Naive thymus-derived CD4-positive, alpha-beta T cell (primary cell): ENCODE measurements at regions of chr1 and their contacts with region 1.

Region 1: GRCh38 chr1:67430352-67431155 is at the start of gene SERBP1:
- DNase-seq: peak; percentile 86 to 97 (median 94)
- ATAC-seq: peak; percentile 94
- H3K4me3 ChIP-seq: peak within 1 kb of the TSS; percentile 98
- H3K4me3 Mint-ChIP-seq: peak within 1 kb of the TSS; percentile 93 to 99 (median 95)
- H3K27ac ChIP-seq: peak within 1 kb of the TSS; percentile 96
- H3K27ac Mint-ChIP-seq: peak within 1 kb of the TSS; percentile 95 to 99 (median 96)
- H3K4me1 ChIP-seq: peaks cover 5 to 16% of the 10 kb centered on the region in 2 donors
- H3K4me1 Mint-ChIP-seq: peaks cover 28 to 64% (median 57%) of the 10 kb centered on the region in 7 donors
- H3K27me3 ChIP-seq: no peaks in the 10 kb centered on the region
- H3K27me3 Mint-ChIP-seq: no peaks in the 10 kb centered on the region
- total RNA-seq, gene SERBP1: 108 to 282 (median 151) TPM

Region 2: DNA sequence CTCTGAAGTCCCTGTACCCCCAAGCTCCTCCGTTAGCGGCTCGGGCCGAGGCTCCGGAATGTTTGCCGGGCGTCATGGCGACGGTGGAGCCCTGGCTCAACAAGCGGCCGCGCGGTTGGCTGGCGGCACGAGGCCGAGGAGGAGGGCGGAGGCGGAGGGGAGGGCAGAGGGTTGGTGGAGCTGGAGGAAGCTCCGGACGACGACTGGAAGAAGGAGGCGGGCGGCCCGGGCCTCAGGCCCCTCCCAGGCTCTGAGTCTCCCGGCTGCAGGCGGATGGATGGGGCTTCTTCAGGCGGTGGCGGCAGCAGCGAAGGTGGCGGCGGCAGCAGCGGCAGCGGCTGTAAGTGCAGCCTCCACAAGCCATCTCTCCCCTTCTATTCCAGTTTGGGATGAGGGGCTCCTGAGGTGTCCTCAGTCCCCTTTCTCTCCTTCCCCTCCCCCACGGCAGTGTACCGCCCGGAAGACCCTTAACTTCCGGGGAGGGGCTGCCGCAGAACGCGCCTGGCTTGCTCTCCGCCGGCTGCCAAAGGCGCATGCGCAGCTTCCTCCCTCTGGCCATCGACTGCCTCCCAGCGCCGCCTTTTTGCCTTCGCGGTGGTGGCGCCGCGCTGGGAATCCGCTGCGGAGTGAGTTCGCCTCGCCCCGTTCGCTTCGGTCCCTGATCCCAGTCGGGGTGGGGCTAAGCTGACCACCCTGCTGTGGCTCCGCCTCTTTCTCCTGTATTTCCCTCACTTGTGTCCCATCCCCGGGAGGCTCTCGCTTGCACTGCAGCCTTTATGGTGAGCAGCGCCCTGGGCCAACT is 505.6 kb before region 1 on chr1 and contains the starts of genes DNAI4 and MIER1:
- CTCF ChIA-PET with region 1: no interaction called
- POLR2A ChIA-PET with region 1: no interaction called
- intact Hi-C with region 1: loop called (anchors 1 kb)
- DNase-seq: peak; percentile 91 to 98 (median 96)
- ATAC-seq: peak; percentile 97
- H3K4me3 ChIP-seq: peak within 1 kb of the TSS; percentile 83
- H3K4me3 Mint-ChIP-seq: peak within 1 kb of the TSS; percentile 92 to 98 (median 96)
- H3K27ac ChIP-seq: peak within 1 kb of the TSS; percentile 95
- H3K27ac Mint-ChIP-seq: peak within 1 kb of the TSS; percentile 95 to 97 (median 97)
- H3K4me1 ChIP-seq: peaks cover 24 to 37% of the 10 kb centered on the region in 2 donors
- H3K4me1 Mint-ChIP-seq: peaks cover 18 to 75% (median 60%) of the 10 kb centered on the region in 7 donors
- H3K27me3 ChIP-seq: no peaks in the 10 kb centered on the region
- H3K27me3 Mint-ChIP-seq: no peaks in the 10 kb centered on the region
- total RNA-seq, gene DNAI4: 1.3 to 10.7 (median 9.7) TPM
- total RNA-seq, gene MIER1: 51.5 to 73.6 (median 70.9) TPM

Region 3: DNA sequence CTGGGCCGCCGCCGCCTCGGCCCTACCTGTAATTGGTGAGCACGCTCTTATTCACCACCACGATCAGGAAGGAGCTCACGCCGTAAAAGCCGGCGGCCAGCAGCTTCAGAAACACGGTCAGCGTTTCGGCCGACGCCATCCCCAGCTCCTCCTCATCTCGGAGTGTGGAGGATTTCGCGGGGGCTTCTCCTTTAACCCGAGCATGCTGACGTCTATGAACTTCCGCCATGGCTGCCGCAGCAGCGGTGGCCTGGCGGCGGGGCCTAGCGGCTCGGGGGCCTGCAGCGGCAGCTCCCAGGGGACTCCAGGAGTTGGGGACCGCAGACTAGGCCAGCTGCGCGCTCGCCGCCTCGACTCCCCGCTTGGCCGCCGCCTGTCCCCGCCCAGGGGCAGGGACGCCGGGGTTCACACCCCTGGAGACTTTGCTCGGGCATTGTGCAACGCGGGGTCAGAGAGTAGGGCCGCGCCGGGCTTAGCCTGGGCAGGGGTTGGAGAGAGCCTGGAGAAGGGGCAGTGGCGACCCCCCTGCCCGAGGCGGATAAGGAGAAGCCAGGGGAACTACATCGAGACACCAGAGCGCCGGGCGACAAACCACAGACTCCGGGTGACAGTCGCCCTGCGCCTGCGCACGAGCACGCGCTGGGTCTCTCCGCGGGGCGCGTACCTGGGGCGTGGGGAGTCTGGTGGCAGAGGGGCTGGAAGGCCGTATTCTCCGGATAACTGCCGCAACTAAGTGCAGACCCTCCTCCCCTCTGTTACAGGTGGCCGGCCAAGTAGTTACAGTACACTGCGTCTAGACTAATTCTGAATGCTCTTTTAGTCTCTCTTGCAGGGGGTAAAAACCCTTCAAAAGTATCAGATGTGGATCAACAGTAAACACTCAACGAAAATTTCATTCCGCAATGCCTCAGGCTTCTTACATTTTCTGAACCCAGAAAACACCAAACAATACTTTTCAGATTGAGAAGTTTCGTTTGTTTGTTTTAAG is 376.5 kb before region 1 on chr1 and contains the start of gene SLC35D1:
- CTCF ChIA-PET with region 1: no interaction called
- POLR2A ChIA-PET with region 1: interaction called, 3 read pairs
- intact Hi-C with region 1: loop called (anchors 1 to 2 kb)
- DNase-seq: peak; percentile 65 to 88 (median 76)
- ATAC-seq: peak; percentile 86
- H3K4me3 ChIP-seq: peak within 1 kb of the TSS; percentile 87
- H3K4me3 Mint-ChIP-seq: peak within 1 kb of the TSS; percentile 90 to 97 (median 95)
- H3K27ac ChIP-seq: peak within 1 kb of the TSS; percentile 96
- H3K27ac Mint-ChIP-seq: peak within 1 kb of the TSS; percentile 80 to 99 (median 94)
- H3K4me1 ChIP-seq: peaks cover 6 to 13% of the 10 kb centered on the region in 2 donors
- H3K4me1 Mint-ChIP-seq: peaks cover 17 to 37% (median 30%) of the 10 kb centered on the region in 7 donors
- H3K27me3 ChIP-seq: no peaks in the 10 kb centered on the region
- H3K27me3 Mint-ChIP-seq: peaks cover 0 to 9% (median 0%) of the 10 kb centered on the region in 5 donors
- total RNA-seq, gene SLC35D1: 9.8 to 25.7 (median 15.4) TPM

Region 4: GRCh38 chr1:67230539-67230938 is 200.0 kb before region 1 on chr1:
- CTCF ChIA-PET with region 1: no interaction called
- POLR2A ChIA-PET with region 1: no interaction called
- intact Hi-C with region 1: loop called (anchors 1 to 10 kb)
- DNase-seq: no peak
- ATAC-seq: no peak
- H3K4me3 ChIP-seq: no peak overlapping the region
- H3K4me3 Mint-ChIP-seq: no peak overlapping the region
- H3K27ac ChIP-seq: no peak overlapping the region
- H3K27ac Mint-ChIP-seq: no peak overlapping the region
- H3K4me1 ChIP-seq: no peaks in the 10 kb centered on the region
- H3K4me1 Mint-ChIP-seq: peaks cover 0 to 8% (median 2%) of the 10 kb centered on the region in 7 donors
- H3K27me3 ChIP-seq: no peaks in the 10 kb centered on the region
- H3K27me3 Mint-ChIP-seq: peaks cover 0 to 7% (median 0%) of the 10 kb centered on the region in 5 donors

Region 5: GRCh38 chr1:67307251-67308060 is 123.1 kb before region 1 on chr1 and contains the start of gene IL12RB2:
- CTCF ChIA-PET with region 1: interaction called, 4 read pairs
- POLR2A ChIA-PET with region 1: no interaction called
- intact Hi-C with region 1: loop called in 1 of 2 experiments (anchors 2 kb)
- DNase-seq: peak in 7 of 9 donors; percentile 11 to 68 (median 18)
- ATAC-seq: peak; percentile 78
- H3K4me3 ChIP-seq: peak within 1 kb of the TSS; percentile 19
- H3K4me3 Mint-ChIP-seq: peak within 1 kb of the TSS; percentile 76 to 99 (median 84)
- H3K27ac ChIP-seq: no peak within 1 kb of the TSS
- H3K27ac Mint-ChIP-seq: peak within 1 kb of the TSS in 2 of 9 donors; percentile 56 to 99
- H3K4me1 ChIP-seq: peaks cover 0 to 5% of the 10 kb centered on the region in 2 donors
- H3K4me1 Mint-ChIP-seq: peaks cover 0 to 78% (median 9%) of the 10 kb centered on the region in 7 donors
- H3K27me3 ChIP-seq: no peaks in the 10 kb centered on the region
- H3K27me3 Mint-ChIP-seq: peaks cover 0 to 22% (median 10%) of the 10 kb centered on the region in 5 donors
- total RNA-seq, gene IL12RB2: 0.38 to 78.1 (median 1.1) TPM

Region 6: GRCh38 chr1:67339623-67340343 is 90.8 kb before region 1 on chr1:
- CTCF ChIA-PET with region 1: no interaction called
- POLR2A ChIA-PET with region 1: interaction called, 4 read pairs
- intact Hi-C with region 1: loop called in 1 of 2 experiments (anchors 5 kb)
- DNase-seq: peak in 1 of 9 donors; percentile 41
- ATAC-seq: no peak
- H3K4me3 ChIP-seq: no peak overlapping the region
- H3K4me3 Mint-ChIP-seq: peak overlapping the region in 3 of 10 donors; percentile 1 to 61 (median 35)
- H3K27ac ChIP-seq: no peak overlapping the region
- H3K27ac Mint-ChIP-seq: peak overlapping the region in 1 of 9 donors; percentile 81
- H3K4me1 ChIP-seq: peaks cover 11 to 24% of the 10 kb centered on the region in 2 donors
- H3K4me1 Mint-ChIP-seq: peaks cover 30 to 81% (median 62%) of the 10 kb centered on the region in 7 donors
- H3K27me3 ChIP-seq: no peaks in the 10 kb centered on the region
- H3K27me3 Mint-ChIP-seq: no peaks in the 10 kb centered on the region

Region 7: GRCh38 chr1:67685067-67685557 is 254.6 kb after region 1 on chr1 and contains the start of gene GADD45A:
- CTCF ChIA-PET with region 1: interaction called, 3 read pairs
- POLR2A ChIA-PET with region 1: interaction called, 6 read pairs
- intact Hi-C with region 1: loop called (anchors 1 kb)
- DNase-seq: peak; percentile 80 to 96 (median 94)
- ATAC-seq: peak; percentile 93
- H3K4me3 ChIP-seq: peak within 1 kb of the TSS; percentile 69
- H3K4me3 Mint-ChIP-seq: peak within 1 kb of the TSS; percentile 90 to 99 (median 98)
- H3K27ac ChIP-seq: peak within 1 kb of the TSS; percentile 59
- H3K27ac Mint-ChIP-seq: peak within 1 kb of the TSS; percentile 77 to 98 (median 93)
- H3K4me1 ChIP-seq: peaks cover 9 to 16% of the 10 kb centered on the region in 2 donors
- H3K4me1 Mint-ChIP-seq: peaks cover 20 to 42% (median 26%) of the 10 kb centered on the region in 7 donors
- H3K27me3 ChIP-seq: no peaks in the 10 kb centered on the region
- H3K27me3 Mint-ChIP-seq: no peaks in the 10 kb centered on the region
- total RNA-seq, gene GADD45A: 15.0 to 70.4 (median 24.2) TPM